ENCODE measurements at regions of chr2 and their contacts with region 1.

Region 1: GRCh38 chr2:200340508-200341224 is 34.2 kb downstream of the SPATS2L start:
- DNase-seq: peak; percentile 56
- H3K4me3 ChIP-seq: no peak overlapping the region
- H3K27ac ChIP-seq: no peak overlapping the region
- H3K4me1 ChIP-seq: peaks cover 11% of the 10 kb centered on the region
- H3K27me3 ChIP-seq: no peaks in the 10 kb centered on the region
- CTCF ChIP-seq: no peak
- POLR2A ChIP-seq: no peak

Region 2: DNA sequence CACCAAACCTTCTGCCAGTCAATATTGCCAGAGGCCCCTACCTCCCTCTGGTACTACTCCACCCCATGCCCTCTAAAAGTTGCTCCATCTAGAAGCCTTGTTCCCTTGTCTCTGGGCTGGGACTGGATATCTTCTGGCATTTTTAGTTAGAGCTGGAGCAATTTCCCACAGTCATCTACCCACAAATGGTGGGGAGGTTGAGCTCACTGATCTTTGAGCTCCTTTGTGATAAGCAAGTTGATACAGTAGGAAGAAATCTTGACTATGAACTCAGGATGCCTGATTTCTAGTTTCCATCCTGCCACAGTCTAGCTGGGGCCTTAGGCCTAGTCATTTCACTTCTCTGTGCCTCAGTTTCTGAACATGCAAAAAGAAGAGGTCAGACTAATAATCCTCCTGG is 230.3 kb before region 1 on chr2:
- CTCF ChIA-PET with region 1: no interaction called
- POLR2A ChIA-PET with region 1: no interaction called
- dilution Hi-C with region 1: no loop called
- intact Hi-C with region 1: no loop called
- DNase-seq: no peak
- H3K4me3 ChIP-seq: no peak overlapping the region
- H3K27ac ChIP-seq: no peak overlapping the region
- H3K4me1 ChIP-seq: no peaks in the 10 kb centered on the region
- H3K27me3 ChIP-seq: peaks cover 0 to 4% of the 10 kb centered on the region in 2 experiments
- CTCF ChIP-seq: no peak
- POLR2A ChIP-seq: no peak

Region 3: GRCh38 chr2:200376513-200377354 is 36.1 kb after region 1 on chr2:
- CTCF ChIA-PET with region 1: interaction called, 3 read pairs
- POLR2A ChIA-PET with region 1: no interaction called
- dilution Hi-C with region 1: no loop called
- intact Hi-C with region 1: loop called (anchors 5 kb)
- DNase-seq: peak; percentile 89
- H3K4me3 ChIP-seq: no peak overlapping the region
- H3K27ac ChIP-seq: peak overlapping the region; percentile 66
- H3K4me1 ChIP-seq: peaks cover 61% of the 10 kb centered on the region
- H3K27me3 ChIP-seq: no peaks in the 10 kb centered on the region
- CTCF ChIP-seq: no peak
- POLR2A ChIP-seq: no peak

Region 4: DNA sequence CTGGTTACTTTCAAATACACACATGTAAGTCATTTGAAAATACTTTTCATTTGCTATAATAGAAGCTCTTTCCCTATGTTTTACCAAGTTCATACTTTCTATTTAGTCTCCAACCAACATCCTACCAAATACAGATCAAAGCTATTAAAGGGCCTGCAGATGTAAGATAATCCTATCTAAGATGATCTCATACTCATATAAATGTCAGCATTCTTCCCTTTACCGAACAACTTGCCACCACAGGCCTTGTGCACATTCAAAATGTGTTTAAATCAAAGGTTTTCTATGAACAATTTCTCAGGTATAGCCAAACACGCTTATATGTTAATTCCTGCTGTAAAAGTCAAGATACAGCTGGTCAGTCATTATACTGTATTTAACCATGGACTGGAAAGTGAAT is 145.9 kb after region 1 on chr2:
- CTCF ChIA-PET with region 1: no interaction called
- POLR2A ChIA-PET with region 1: no interaction called
- dilution Hi-C with region 1: no loop called
- intact Hi-C with region 1: no loop called
- DNase-seq: no peak
- H3K4me3 ChIP-seq: no peak overlapping the region
- H3K27ac ChIP-seq: no peak overlapping the region
- H3K4me1 ChIP-seq: no peaks in the 10 kb centered on the region
- H3K27me3 ChIP-seq: no peaks in the 10 kb centered on the region
- CTCF ChIP-seq: no peak
- POLR2A ChIP-seq: no peak

Measured in endothelial cell of umbilical vein (primary cell).